Activated CD4-positive, alpha-beta memory T cell treated with anti-CD3 and anti-CD28 coated beads for 36 hours (primary cell): ENCODE measurements at regions of chr20 and their contacts with region 1.

Region 1: DNA sequence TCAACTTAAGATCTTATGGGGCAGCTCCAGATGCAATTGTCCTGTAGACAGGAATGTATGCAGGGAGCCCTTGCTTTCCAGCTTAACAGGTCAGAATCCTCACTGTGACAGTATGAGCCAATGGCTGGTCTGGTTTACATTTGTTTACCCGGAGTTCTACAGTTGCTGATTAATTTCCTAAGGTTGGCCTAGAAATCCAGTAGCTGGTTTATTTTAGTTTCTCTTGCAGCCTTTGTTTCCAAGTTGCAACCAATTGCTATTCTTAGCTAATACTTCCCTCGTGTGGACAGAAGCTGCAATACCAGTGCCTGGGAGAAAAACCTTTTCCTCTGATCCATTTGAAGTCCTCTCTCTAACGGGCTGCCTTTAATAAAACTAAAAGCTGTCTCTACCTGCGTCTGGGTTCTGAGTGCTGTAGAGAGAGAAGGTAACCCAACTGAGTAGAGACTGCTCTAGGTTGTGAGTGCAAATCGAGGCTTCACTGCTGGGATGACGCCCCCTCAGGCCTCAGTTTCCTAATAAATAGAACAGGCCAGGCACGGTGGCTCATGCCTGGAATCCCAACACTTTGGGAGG is 45.9 kb downstream of the ZNF217 start:
- DNase-seq: peak; percentile 39
- H3K4me3 Mint-ChIP-seq: no peak overlapping the region
- H3K27ac Mint-ChIP-seq: no peak overlapping the region
- H3K4me1 Mint-ChIP-seq: no peaks in the 10 kb centered on the region
- H3K27me3 Mint-ChIP-seq: no peaks in the 10 kb centered on the region

Region 2: DNA sequence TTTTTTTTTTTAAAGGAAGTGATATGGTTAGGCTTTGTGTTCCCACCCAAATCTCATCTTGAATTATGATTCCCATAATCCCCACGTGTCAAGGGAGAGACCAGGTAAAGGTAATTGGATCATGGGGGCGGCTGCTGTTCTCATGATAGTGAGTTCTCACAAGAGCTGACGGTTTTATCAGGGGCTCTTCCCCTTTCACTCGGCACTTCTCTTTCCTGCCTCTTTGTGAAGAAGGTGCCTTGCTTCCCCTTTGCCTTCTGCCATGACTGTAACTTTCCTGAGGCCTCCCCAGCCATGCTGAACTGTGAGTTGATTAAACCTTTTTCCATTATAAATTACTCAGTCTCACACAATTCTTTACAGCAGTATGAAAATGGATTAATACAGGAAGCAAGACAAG is 1420.4 kb before region 1 on chr20:
- CTCF ChIA-PET with region 1: interaction called, 15 read pairs
- POLR2A ChIA-PET with region 1: no interaction called
- intact Hi-C with region 1: no loop called
- DNase-seq: no peak
- H3K4me3 Mint-ChIP-seq: no peak overlapping the region
- H3K27ac Mint-ChIP-seq: no peak overlapping the region
- H3K4me1 Mint-ChIP-seq: no peaks in the 10 kb centered on the region
- H3K27me3 Mint-ChIP-seq: no peaks in the 10 kb centered on the region

Region 3: DNA sequence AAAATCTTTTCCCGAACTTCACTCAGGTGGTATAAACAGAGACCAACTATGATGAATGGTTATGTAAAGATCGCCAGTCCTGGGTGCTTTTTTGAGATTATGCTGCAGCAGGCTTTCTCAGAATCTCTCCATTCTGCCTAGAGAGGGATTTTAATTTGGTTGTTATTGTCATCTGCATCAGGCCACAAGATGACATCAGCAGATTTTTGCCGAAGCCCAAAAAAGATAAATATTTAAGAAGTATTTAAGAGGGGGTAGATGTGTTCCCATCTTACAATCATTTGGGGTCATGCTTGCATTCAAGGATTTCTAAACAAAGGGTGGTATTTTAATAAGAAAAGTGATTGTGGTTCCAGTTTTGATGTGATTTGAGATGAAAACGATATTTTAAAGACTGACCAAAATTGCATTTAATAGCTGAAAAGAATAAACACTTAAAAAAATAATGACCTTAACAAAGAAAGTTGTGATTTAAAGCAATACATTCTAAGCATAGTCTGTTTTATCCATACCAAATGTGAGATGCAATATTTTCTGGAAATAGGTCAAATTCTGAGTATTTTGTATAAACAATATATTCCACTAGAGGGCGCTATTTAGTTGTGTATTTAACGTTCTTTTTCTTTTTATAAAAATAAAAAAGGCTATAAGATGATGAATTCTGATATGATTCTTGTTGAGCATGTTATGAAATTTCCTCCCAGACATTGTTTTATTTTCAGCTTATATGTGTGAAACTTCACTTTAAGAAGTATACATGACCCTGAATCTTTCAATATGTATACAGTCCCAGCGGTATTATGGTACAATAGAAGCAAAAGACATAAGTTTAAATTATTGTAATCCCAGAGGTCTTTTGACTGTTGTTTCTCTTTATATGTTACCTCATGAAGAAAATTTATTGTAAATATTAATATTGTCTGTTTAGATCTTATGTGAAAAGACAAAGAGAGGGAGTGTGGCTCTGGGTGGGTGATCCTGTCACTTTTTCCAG is 1305.2 kb before region 1 on chr20:
- CTCF ChIA-PET with region 1: interaction called, 10 read pairs
- POLR2A ChIA-PET with region 1: no interaction called
- intact Hi-C with region 1: no loop called
- DNase-seq: no peak
- H3K4me3 Mint-ChIP-seq: no peak overlapping the region
- H3K27ac Mint-ChIP-seq: no peak overlapping the region
- H3K4me1 Mint-ChIP-seq: no peaks in the 10 kb centered on the region
- H3K27me3 Mint-ChIP-seq: peaks cover 2% of the 10 kb centered on the region

Region 4: DNA sequence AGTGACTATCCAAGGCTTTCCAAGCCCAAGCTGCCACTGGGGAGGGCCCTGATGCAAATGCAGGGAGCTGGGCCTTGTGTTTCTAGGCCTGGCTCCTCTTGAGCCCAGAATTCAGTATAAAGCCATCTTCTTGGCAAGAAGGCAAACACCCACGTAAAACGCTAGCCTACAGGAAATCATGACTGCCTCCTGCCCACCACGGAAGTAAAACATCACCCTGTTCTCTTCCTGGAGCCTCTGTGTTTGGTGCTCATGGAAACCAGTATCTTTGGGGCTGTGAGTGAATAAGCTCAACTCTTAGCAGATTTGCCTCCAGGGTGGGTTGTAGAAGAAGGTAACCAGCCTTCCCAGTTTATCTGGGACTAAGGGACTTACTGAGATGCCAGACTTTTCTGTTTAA is 225.1 kb before region 1 on chr20:
- CTCF ChIA-PET with region 1: no interaction called
- POLR2A ChIA-PET with region 1: no interaction called
- intact Hi-C with region 1: loop called (anchors 5 kb)
- DNase-seq: peak; percentile 59
- H3K4me3 Mint-ChIP-seq: no peak overlapping the region
- H3K27ac Mint-ChIP-seq: peak overlapping the region; percentile 52
- H3K4me1 Mint-ChIP-seq: peaks cover 22% of the 10 kb centered on the region
- H3K27me3 Mint-ChIP-seq: no peaks in the 10 kb centered on the region

Region 5: DNA sequence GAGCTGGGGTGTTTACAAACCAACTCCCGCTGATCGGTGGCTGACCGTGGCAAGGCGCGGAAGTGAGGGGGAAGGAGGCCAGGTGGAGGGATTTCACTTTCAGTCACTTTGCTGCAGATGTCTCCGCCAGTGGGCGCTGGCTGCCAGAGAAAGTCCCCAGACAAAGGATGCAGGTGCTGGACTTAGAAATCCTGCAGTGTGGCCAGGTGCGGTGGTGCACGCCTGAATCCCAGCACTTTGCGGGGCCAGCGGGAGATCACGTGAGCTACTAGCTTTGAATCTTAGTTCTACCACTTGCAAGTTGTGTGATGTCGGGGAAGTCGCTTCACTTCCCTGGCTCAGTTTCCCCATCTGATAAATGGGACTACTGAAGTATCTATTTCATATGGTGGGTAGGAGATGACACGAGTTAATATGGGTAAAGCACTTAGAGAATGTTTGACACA is 134.5 kb before region 1 on chr20:
- CTCF ChIA-PET with region 1: interaction called, 9 read pairs
- POLR2A ChIA-PET with region 1: no interaction called
- intact Hi-C with region 1: loop called (anchors 10 kb)
- DNase-seq: peak; percentile 68
- H3K4me3 Mint-ChIP-seq: no peak overlapping the region
- H3K27ac Mint-ChIP-seq: no peak overlapping the region
- H3K4me1 Mint-ChIP-seq: peaks cover 6% of the 10 kb centered on the region
- H3K27me3 Mint-ChIP-seq: no peaks in the 10 kb centered on the region

Region 6: GRCh38 chr20:53578492-53579222 is 30.9 kb after region 1 on chr20:
- CTCF ChIA-PET with region 1: no interaction called
- POLR2A ChIA-PET with region 1: no interaction called
- intact Hi-C with region 1: no loop called
- DNase-seq: peak; percentile 48
- H3K4me3 Mint-ChIP-seq: peak overlapping the region; percentile 82
- H3K27ac Mint-ChIP-seq: peak overlapping the region; percentile 97
- H3K4me1 Mint-ChIP-seq: peaks cover 85% of the 10 kb centered on the region
- H3K27me3 Mint-ChIP-seq: no peaks in the 10 kb centered on the region